PC-3 (cell line): ENCODE measurements at regions of chr9 and their contacts with region 1.

Region 1: GRCh38 chr9:95981761-95982390 is 106.4 kb downstream of the ERCC6L2 start:
- DNase-seq: no peak
- ATAC-seq: no peak
- H3K4me3 ChIP-seq: no peak overlapping the region
- H3K27ac ChIP-seq: no peak overlapping the region
- H3K4me1 ChIP-seq: no peaks in the 10 kb centered on the region
- H3K27me3 ChIP-seq: no peaks in the 10 kb centered on the region
- CTCF ChIP-seq: no peak

Region 2: DNA sequence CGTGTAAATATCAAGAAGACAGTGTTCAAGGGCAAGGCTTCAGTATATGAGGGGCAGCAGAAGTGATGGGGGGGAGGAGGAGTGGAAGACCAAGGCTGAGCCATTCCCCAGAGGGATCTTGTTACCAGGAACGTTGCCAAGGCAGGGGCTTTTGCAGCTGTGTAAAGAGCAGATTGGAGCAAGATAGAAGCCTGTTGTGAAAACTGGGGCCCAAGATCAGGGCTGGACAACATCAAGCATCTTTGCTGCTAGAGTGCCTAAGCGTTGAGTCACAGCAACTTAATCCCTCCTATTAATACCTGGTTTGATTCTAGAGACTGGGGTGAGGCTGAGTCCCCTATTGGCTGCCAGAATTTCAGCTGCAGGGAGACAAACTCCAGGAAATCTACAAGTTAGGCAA is 124.8 kb before region 1 on chr9:
- CTCF ChIA-PET with region 1: no interaction called
- POLR2A ChIA-PET with region 1: no interaction called
- intact Hi-C with region 1: no loop called
- DNase-seq: peak; percentile 82
- ATAC-seq: peak; percentile 64
- H3K4me3 ChIP-seq: no peak overlapping the region
- H3K27ac ChIP-seq: no peak overlapping the region
- H3K4me1 ChIP-seq: peaks cover 59% of the 10 kb centered on the region
- H3K27me3 ChIP-seq: no peaks in the 10 kb centered on the region
- CTCF ChIP-seq: no peak

Region 3: GRCh38 chr9:95953986-95954385 is 27.9 kb before region 1 on chr9:
- CTCF ChIA-PET with region 1: no interaction called
- POLR2A ChIA-PET with region 1: no interaction called
- intact Hi-C with region 1: no loop called
- DNase-seq: no peak
- ATAC-seq: no peak
- H3K4me3 ChIP-seq: no peak overlapping the region
- H3K27ac ChIP-seq: no peak overlapping the region
- H3K4me1 ChIP-seq: no peaks in the 10 kb centered on the region
- H3K27me3 ChIP-seq: no peaks in the 10 kb centered on the region
- CTCF ChIP-seq: no peak

Region 4: DNA sequence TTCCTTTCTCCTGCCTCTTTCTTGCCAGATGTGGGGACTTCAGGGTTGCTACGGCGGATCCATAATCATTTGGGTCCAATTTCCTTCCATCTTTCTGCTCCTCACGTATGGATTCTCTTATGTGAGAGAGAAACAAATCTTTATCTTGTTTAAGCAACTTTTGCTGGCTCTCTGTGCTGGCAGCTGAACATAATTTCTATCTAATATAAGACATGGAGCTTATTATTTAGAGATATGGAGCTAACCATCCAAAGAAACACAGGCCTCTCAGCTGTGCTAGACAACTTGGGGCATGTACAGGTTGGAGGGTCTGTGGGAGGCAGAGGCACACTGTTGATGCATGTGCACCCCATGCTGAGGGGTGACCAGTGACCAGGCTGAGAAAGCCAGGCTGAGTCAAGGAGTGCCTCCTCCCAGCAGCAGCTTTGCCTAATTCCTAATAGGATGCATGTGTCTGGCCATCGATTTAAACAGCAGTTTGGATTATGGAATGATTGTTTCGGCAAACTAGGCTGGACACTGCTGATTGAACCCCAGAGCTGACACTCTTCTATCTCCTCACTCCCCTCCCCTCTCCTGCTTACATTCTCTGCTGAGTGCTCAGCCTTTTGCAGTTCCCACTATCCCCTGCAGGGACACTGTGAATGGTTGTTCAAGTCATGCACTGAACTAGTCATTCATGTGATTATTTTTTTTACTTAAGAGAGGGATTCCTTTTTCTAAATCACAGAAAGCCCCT is 89.4 kb after region 1 on chr9:
- CTCF ChIA-PET with region 1: no interaction called
- POLR2A ChIA-PET with region 1: no interaction called
- intact Hi-C with region 1: loop called (anchors 10 kb)
- DNase-seq: peak; percentile 40
- ATAC-seq: peak; percentile 67
- H3K4me3 ChIP-seq: no peak overlapping the region
- H3K27ac ChIP-seq: no peak overlapping the region
- H3K4me1 ChIP-seq: peaks cover 5% of the 10 kb centered on the region; the same call in 1 of the 2 replicates
- H3K27me3 ChIP-seq: no peaks in the 10 kb centered on the region
- CTCF ChIP-seq: peak; percentile 49